ENCODE measurements at regions of chr11 and their contacts with region 1.

Region 1: GRCh38 chr11:68297812-68298658 is 14.4 kb upstream of the LRP5 start:
- H3K4me3 ChIP-seq: no peak overlapping the region
- H3K27ac ChIP-seq: no peak overlapping the region
- H3K4me1 ChIP-seq: no peaks in the 10 kb centered on the region
- CTCF ChIP-seq: peak; percentile 79

Region 2: GRCh38 chr11:67820081-67820480 is 478.0 kb before region 1 on chr11:
- CTCF ChIA-PET with region 1: no interaction called
- POLR2A ChIA-PET with region 1: no interaction called
- H3K4me3 ChIP-seq: no peak overlapping the region
- H3K27ac ChIP-seq: no peak overlapping the region
- H3K4me1 ChIP-seq: no peaks in the 10 kb centered on the region
- CTCF ChIP-seq: no peak

Region 3: GRCh38 chr11:68206187-68206601 is 91.8 kb before region 1 on chr11:
- CTCF ChIA-PET with region 1: interaction called, 43 read pairs
- POLR2A ChIA-PET with region 1: no interaction called
- H3K4me3 ChIP-seq: no peak overlapping the region
- H3K27ac ChIP-seq: no peak overlapping the region
- H3K4me1 ChIP-seq: peaks cover 2% of the 10 kb centered on the region; the same call in 1 of the 2 replicates
- CTCF ChIP-seq: no peak

Region 4: GRCh38 chr11:68257475-68258362 is 40.3 kb before region 1 on chr11:
- CTCF ChIA-PET with region 1: interaction called, 122 read pairs
- POLR2A ChIA-PET with region 1: interaction called, 3 read pairs
- H3K4me3 ChIP-seq: no peak overlapping the region
- H3K27ac ChIP-seq: no peak overlapping the region
- H3K4me1 ChIP-seq: no peaks in the 10 kb centered on the region
- CTCF ChIP-seq: peak; percentile 81

Region 5: GRCh38 chr11:68266121-68266891 is 31.7 kb before region 1 on chr11:
- CTCF ChIA-PET with region 1: interaction called, 122 read pairs
- POLR2A ChIA-PET with region 1: interaction called, 3 read pairs
- H3K4me3 ChIP-seq: no peak overlapping the region
- H3K27ac ChIP-seq: no peak overlapping the region
- H3K4me1 ChIP-seq: no peaks in the 10 kb centered on the region
- CTCF ChIP-seq: no peak

Region 6: DNA sequence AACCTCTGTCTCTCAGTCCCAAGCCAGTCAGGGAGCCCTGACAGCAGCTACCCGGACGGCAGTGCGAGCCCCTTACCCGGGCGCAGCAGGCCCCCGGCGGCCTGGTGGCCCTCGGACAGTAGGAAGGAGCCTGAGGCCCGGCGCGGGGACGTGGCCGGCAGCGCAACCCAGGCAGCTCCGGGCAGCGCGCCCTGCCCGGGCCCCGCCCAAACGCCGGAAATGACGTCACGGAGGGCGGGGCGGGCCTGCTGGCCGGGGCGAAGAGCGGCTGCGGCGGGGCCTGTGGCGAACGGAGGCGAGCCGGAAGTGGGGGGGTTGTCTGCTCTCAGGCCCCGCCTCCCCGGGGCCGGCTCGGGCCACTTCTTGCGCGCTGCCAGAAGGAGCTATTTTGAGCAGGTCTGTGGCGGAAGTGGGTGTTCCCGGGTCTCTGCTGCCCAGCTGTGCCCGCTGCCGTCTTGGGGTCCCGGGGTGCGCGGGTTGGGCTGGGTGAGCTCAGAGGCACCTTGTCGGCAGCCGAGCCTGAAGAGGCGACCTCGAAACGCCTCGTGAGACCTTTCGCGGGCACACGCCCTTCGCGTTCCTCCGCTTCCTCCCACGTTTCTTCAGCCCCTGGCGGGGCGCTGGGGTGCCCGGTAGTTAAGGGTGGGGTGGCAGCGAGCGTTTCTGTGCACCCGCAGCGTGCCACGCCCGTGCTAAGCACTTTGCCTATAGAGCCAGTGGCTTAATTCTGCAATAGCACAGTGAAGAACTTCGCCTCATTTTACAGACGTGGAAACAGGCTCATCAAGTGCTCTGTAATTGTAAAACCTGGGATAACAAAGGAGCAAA is 26.0 kb before region 1 on chr11 and contains the start of gene C11orf24:
- CTCF ChIA-PET with region 1: interaction called, 24 read pairs
- POLR2A ChIA-PET with region 1: interaction called, 12 read pairs
- H3K4me3 ChIP-seq: peak within 1 kb of the TSS; percentile 84
- H3K27ac ChIP-seq: peak within 1 kb of the TSS; percentile 50; the same call in 1 of the 2 replicates
- H3K4me1 ChIP-seq: no peaks in the 10 kb centered on the region; the same call in 1 of the 2 replicates
- CTCF ChIP-seq: peak; percentile 44

Region 7: DNA sequence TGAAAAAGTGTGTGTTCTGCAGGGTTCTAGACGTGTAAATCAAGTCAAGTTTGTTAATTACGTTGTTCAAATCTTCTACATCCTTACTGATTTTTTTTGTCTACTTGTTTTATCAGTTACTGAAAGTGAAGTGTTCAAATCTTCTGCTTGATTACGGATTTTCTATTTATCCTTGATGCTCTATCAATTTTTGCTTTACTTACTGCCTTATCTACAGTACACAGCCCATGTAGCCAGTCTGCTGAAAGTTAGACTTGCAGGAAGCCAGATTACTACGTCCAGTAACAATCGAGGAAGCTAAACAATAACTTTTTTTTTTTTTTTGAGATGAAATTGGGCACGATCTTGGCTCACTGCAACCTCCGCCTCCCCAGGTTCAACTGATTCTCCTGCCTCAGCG is 10.6 kb before region 1 on chr11:
- CTCF ChIA-PET with region 1: interaction called, 25 read pairs
- POLR2A ChIA-PET with region 1: no interaction called
- H3K4me3 ChIP-seq: no peak overlapping the region
- H3K27ac ChIP-seq: no peak overlapping the region
- H3K4me1 ChIP-seq: no peaks in the 10 kb centered on the region
- CTCF ChIP-seq: no peak

Region 8: DNA sequence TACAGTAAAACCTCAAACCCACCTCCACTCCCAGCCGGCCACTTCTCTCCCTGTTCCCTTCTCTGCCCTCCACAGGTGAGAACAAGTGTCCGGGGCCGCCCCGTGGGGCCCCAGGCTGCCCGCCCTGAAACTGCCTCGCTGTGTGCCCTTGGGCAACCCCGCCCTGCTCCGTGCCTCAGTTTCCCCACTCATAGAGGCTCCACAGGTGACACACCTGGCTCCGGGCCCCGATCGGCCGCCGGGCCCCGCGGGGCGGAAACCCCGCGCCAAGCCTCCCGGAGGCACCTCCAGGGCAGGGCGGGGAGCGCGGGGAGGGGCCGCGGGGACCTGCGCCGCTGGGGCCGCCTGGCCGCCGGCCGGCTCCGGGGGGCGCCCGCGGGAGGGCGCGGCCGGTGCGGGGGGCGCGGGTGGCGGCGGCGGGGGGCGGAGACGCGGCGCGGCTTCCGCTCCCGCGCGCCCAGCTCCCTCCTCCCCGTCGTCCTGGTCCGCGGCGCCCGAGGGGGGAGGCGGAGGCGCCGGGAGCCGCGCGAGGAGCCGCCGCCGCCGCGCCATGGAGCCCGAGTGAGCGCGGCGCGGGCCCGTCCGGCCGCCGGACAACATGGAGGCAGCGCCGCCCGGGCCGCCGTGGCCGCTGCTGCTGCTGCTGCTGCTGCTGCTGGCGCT is 14.2 kb after region 1 on chr11 and contains the start of gene LRP5:
- CTCF ChIA-PET with region 1: interaction called, 29 read pairs
- POLR2A ChIA-PET with region 1: no interaction called
- H3K4me3 ChIP-seq: peak within 1 kb of the TSS; percentile 70
- H3K27ac ChIP-seq: peak within 1 kb of the TSS; percentile 48; the same call in 1 of the 2 replicates
- H3K4me1 ChIP-seq: no peaks in the 10 kb centered on the region
- CTCF ChIP-seq: no peak

Measured in HEK293 (cell line).